BJ (cell line): ENCODE measurements at regions of chr14 and their contacts with region 1.

Region 1: DNA sequence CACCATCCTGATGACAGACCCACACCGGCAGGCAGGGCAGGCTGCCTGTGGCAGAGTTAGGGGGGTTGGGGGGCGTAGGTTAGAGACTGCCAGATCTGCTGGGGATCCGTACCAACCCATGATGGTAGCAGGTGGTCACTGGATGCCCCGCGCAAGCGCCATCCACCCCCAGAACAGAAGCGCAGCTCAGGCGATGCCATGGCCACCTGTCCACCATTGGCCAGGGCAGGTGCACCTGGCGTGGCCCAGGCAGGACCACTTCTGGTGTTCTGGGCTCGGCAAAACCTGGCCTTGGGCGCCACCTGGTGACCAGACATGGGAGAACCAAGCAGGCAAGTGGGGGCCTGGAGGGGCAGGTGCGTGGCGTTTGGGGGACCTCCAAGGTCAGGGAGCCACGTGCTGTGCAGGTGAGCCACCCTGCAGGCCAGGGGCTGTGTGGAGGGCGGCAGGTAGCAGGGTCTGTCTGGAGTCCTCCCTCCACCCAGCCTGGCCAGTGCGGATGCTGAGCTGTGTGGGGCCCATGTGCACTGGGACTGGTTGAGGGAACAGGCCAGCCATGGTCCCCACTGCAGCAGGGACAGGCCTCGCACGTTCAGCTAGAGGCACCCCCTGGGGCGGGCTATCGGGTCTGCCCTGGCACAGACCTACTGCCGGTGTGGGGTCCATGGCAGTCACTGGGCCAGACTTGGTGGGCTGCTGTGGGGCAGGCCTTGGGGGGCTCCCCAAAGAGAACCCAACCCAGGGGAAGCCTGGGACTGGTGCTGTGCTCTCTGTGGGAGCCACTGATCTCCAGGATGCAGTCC is 15.6 kb downstream of the BAG5 start:
- DNase-seq: no peak
- H3K4me3 ChIP-seq: no peak overlapping the region
- H3K27me3 ChIP-seq: no peaks in the 10 kb centered on the region
- CTCF ChIP-seq: peak; percentile 88

Region 2: GRCh38 chr14:103500148-103500990 is 46.5 kb before region 1 on chr14:
- CTCF ChIA-PET with region 1: interaction called, 92 read pairs
- POLR2A ChIA-PET with region 1: no interaction called
- DNase-seq: no peak
- H3K4me3 ChIP-seq: no peak overlapping the region
- H3K27me3 ChIP-seq: no peaks in the 10 kb centered on the region
- CTCF ChIP-seq: peak; percentile 97

Region 3: GRCh38 chr14:103528587-103529382 is 18.1 kb before region 1 on chr14 and contains the start of gene TRMT61A:
- CTCF ChIA-PET with region 1: interaction called, 228 read pairs
- POLR2A ChIA-PET with region 1: no interaction called
- DNase-seq: no peak
- H3K4me3 ChIP-seq: peak within 1 kb of the TSS; percentile 96
- H3K27me3 ChIP-seq: peaks cover under 1% of the 10 kb centered on the region; the same call in 1 of the 2 replicates
- CTCF ChIP-seq: no peak
- polyA plus RNA-seq, gene TRMT61A: 6.2 and 11.7 TPM in 2 replicates

Region 4: DNA sequence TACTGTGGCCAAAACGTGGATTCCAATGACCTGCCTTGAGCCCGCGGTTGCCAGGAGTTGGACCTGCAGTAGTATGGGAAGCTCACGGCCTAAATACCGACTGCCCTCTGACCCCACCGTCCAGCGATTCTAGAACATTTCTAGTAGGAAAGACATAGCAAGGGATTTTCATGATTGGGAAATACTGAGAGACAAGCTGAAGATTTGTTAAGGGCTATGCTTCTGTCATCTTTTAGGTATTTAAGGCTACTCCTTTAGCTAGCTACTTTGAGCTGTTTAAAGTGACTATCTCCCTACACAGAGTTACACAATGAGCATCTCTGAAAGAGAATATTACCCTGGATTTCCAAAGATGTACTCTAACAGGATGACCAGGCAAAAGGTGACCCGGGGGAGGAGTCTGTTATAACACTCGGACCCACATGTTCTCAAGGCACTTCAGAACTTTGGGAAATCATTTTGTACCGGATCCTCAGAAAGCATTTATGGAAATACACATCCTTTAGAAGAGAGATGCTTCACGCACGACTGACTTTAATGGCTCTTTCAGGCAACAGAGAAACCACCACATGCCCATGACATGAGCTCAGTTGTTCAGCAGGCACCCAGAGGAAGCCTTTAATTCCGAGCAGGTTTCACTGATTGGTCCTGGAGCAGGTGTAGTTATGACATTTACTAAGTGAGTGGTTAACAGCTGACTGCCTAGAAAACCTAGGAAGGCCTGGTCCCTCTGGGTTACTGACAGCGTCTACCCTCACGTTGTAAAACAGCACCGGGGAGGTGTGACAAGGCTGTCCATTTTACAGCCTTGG is 11.4 kb after region 1 on chr14:
- CTCF ChIA-PET with region 1: interaction called, 14 read pairs
- POLR2A ChIA-PET with region 1: no interaction called
- DNase-seq: no peak
- H3K4me3 ChIP-seq: no peak overlapping the region
- H3K27me3 ChIP-seq: no peaks in the 10 kb centered on the region
- CTCF ChIP-seq: no peak